ENCODE measurements at regions of chr17 and their contacts with region 1.

Region 1: DNA sequence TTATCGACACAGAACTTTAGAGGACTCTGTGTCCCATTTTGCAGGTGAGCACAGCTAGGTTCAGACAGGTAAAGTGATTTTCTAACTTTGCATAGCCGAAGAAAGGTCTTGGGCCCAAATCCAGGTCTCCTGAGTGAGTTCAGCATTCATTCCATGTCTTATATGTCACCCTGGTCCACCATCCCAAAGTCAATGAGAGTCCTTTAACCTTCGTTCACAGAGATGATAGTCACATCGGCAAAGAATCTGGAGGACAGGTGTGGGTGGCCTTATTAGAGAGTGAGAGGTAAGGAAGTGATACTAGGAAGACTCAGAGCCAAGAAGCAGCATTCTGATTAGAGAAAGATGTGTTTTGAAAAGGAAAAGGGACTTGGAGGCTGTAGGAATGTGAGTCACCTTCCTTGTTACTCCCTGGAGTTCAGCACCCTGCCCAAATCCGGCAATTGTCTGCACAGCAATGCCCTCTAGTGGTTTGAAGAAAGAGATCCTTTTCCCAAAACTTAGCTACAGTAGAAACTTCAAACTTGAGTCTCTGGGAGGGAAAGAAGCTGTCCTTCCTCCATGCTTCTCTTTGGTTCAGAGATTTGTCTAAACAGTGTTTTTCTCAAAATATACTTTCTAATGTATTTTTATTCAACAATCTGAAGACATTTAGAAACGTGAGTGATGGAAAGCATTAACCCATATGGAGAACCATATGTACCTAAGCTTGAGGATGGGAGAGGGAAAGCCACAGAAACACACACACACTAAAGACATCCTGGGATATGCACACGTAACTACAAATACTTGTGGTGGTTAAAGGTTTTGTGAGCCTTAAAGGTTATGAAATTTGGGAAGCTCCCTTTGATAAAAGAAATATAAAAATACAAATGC is 96.4 kb upstream of the SHISA6 start:
- DNase-seq: peak; percentile 83
- H3K4me3 ChIP-seq: no peak overlapping the region
- H3K27ac ChIP-seq: no peak overlapping the region
- H3K4me1 ChIP-seq: peaks cover 9% of the 10 kb centered on the region
- H3K27me3 ChIP-seq: no peaks in the 10 kb centered on the region
- CTCF ChIP-seq: peak; percentile 88

Region 2: GRCh38 chr17:10743316-10744009 is 401.1 kb before region 1 on chr17:
- CTCF ChIA-PET with region 1: no interaction called
- POLR2A ChIA-PET with region 1: no interaction called
- intact Hi-C with region 1: loop called (anchors 10 kb)
- DNase-seq: no peak
- H3K4me3 ChIP-seq: no peak overlapping the region
- H3K27ac ChIP-seq: no peak overlapping the region
- H3K4me1 ChIP-seq: peaks cover 10% of the 10 kb centered on the region
- H3K27me3 ChIP-seq: peaks cover 4% of the 10 kb centered on the region
- CTCF ChIP-seq: no peak

Region 3: GRCh38 chr17:10968007-10968406 is 176.6 kb before region 1 on chr17:
- CTCF ChIA-PET with region 1: no interaction called
- POLR2A ChIA-PET with region 1: no interaction called
- intact Hi-C with region 1: no loop called
- DNase-seq: no peak
- H3K4me3 ChIP-seq: no peak overlapping the region
- H3K27ac ChIP-seq: no peak overlapping the region
- H3K4me1 ChIP-seq: no peaks in the 10 kb centered on the region
- H3K27me3 ChIP-seq: no peaks in the 10 kb centered on the region
- CTCF ChIP-seq: no peak

Region 4: DNA sequence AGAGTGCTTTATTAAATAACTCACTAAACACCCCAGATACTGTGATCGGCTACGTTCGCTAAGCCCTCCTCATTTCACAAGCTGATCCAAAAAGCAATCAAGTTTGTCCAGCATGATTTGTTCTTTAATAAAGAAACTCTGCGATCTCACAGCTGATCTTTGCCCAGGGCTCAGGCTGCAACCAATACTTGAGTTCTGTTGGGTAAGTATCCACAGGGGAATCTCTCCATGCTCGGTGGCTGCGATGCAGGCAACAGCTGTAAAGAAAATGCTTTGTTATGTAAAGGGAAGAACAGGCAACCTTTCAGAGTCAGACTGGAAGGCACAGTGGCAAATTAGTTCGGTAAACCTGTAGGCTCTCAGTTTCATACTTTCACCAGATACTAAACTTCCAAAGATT is 163.9 kb after region 1 on chr17:
- CTCF ChIA-PET with region 1: no interaction called
- POLR2A ChIA-PET with region 1: no interaction called
- intact Hi-C with region 1: no loop called
- DNase-seq: no peak
- H3K4me3 ChIP-seq: no peak overlapping the region
- H3K27ac ChIP-seq: no peak overlapping the region
- H3K4me1 ChIP-seq: peaks cover 3% of the 10 kb centered on the region
- H3K27me3 ChIP-seq: no peaks in the 10 kb centered on the region
- CTCF ChIP-seq: no peak